H1 (cell line): ENCODE measurements at regions of chr10 and their contacts with region 1.

Region 1: DNA sequence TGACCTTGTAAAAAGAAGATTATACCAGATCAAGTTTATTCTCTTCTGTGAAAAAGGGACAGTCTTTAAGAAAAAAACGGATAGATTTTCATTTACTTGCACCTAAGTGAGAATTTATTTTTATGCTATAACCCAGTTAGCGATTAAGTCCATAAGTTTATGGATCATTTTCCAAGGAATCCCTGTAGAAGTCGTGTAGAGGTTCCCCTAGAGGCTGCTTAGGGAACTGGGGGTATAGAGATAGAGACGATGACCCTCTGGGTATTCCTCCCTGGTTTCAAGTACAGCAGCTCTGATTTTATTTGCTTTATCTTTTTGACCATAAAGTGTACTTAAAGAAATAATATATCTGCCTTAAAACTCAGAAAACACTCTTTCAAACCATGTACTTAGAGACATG is 648.4 kb upstream of the LRRTM3 start:
- DNase-seq: no peak
- H3K4me3 ChIP-seq: no peak overlapping the region
- H3K27ac ChIP-seq: no peak overlapping the region
- H3K4me1 ChIP-seq: peaks cover 0 to 5% (median 2%) of the 10 kb centered on the region in 4 experiments; a peak in 2 of 7 replicates
- H3K27me3 ChIP-seq: no peaks in the 10 kb centered on the region
- CTCF ChIP-seq: peak in 2 of 3 experiments; percentile 14 to 51; a peak in 2 of 4 replicates
- EP300 ChIP-seq: no peak
- POLR2A ChIP-seq: no peak
- RAD21 ChIP-seq: peak in 1 of 2 experiments; percentile 26; a peak in 2 of 4 replicates

Region 2: DNA sequence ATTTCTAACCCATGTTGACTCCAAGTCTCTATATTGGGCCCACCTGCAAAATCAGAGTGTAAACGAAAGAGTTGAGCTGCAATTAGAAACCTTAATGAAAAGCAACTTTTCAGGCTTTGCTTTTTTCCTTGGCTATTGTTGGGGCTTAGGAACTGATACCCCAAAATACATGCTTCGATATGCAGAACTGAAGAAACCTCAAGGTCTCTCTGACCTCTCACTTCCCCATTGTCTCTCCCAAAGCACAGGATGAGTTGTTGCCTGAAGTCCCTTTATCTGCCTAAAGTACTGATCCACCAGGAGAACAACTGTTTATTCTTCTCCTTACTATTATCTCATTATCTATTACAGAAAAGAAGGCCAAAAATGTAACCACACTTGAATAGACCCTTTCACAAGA is 17.6 kb before region 1 on chr10:
- CTCF ChIA-PET with region 1: interaction called, 12 read pairs
- POLR2A ChIA-PET with region 1: no interaction called
- DNase-seq: no peak
- H3K4me3 ChIP-seq: no peak overlapping the region
- H3K27ac ChIP-seq: no peak overlapping the region
- H3K4me1 ChIP-seq: 0 out of 7 replicates have a peak, but pooled peaks cover 0 to 2% (median 0%) of the 10 kb centered on the region in 4 experiments
- H3K27me3 ChIP-seq: no peaks in the 10 kb centered on the region
- CTCF ChIP-seq: no peak
- EP300 ChIP-seq: no peak
- POLR2A ChIP-seq: no peak
- RAD21 ChIP-seq: no peak